Left cardiac atrium (tissue), 4 donors: ENCODE measurements at regions of chr3 and their contacts with region 1.

Region 1: DNA sequence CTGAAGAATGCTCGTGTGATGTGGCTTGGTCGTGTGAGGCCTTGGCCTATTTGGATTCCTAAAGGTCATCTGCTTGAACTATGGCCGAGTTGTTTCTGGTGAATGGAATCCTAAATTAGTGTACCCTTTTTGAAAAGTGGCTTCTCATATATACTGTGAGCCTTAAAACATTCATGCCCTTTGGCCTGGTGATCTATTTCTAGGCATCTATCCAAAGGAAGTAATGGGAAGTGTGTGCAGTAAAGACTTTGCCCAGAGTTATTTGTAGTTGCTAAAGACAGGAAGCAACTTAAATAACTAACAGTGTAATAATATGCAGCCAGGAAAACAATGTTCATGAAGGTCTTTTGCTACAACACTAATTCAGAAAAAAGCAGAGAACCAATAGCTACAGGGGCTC is 3.0 kb downstream of the DGKG start:
- DNase-seq: no peak
- ATAC-seq: no peak

Region 2: DNA sequence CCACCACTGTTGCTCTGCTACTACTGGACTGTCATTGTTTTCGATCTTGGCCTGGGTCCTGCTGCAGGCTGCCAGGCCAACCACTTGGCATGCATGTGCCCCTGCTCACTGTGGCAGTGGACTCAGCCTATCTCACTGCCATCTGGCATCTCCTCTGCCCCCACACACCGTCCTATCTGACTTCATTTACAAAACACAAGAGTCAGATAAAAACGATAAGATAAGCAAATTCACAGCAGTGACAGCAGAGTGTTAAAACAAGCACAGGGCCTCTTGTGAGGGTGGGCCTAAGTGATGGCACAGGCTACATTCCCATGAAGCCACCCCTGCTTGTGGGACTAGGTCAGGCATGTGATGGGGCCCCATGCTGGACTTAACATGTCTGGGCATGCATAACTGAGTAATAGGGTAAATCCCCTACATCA is 117.0 kb after region 1 on chr3:
- intact Hi-C with region 1: loop called in 1 of 2 experiments (anchors 10 kb)
- DNase-seq: no peak
- ATAC-seq: peak in 1 of 2 donors; percentile 58

Region 3: DNA sequence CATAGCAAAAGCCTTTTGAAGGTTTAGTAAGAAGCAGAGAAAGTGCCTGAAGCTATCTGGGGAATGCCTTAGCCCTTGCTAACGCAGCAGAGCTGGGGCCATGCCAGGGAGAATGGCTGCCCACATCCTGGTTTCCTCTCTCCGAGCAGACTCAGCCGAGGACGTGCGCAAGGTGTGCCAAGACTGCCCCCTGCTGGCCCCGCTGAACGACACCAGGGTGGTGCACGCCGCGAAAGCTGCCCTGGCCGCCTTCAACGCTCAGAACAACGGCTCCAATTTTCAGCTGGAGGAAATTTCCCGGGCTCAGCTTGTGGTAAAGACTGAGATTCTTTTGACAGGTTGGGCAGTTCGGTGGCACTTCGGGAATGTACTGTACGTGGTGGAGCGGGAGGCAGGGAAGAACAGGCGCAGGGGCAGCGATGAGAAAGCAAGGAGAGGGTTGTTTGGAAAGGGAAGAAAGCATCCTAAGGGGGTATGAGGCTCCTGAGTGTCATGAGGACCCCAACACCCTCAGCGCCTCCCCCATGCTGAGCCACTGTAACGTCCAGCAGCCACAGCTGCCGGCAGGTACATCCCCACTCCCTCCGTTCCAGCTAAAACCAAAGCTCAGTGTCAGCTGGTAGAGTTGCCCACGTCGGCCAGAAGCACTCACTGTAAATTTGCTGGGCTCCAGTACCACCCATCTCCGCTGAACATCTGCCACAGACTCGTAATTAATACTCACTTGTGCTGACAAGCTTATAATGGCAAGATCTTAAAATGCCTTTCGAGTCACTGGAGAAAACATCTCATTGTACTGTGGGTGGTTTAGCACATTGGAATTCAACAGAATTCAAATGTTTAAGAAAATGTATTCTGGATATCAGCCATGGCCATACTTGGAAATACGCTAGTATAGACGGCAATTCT is 258.2 kb after region 1 on chr3:
- intact Hi-C with region 1: no loop called
- DNase-seq: peak; percentile 91
- ATAC-seq: peak; percentile 97 to 98